ENCODE measurements at regions of chr22 and their contacts with region 1.

Region 1: GRCh38 chr22:41951898-41952474 is at the start of gene SMIM45:
- DNase-seq: no peak
- H3K4me3 ChIP-seq: no peak within 1 kb of the TSS
- H3K27ac ChIP-seq: no peak within 1 kb of the TSS
- H3K4me1 ChIP-seq: peaks cover 4 to 5% (median 5%) of the 10 kb centered on the region in 3 donors
- H3K27me3 ChIP-seq: no peaks in the 10 kb centered on the region
- CTCF ChIP-seq: no peak
- POLR2A ChIP-seq: no peak

Region 2: GRCh38 chr22:41998361-41999275 is 46.6 kb after region 1 on chr22 and contains the start of gene WBP2NL:
- intact Hi-C with region 1: no loop called
- DNase-seq: peak; percentile 47
- H3K4me3 ChIP-seq: peak within 1 kb of the TSS; percentile 38 to 69 (median 52)
- H3K27ac ChIP-seq: peak within 1 kb of the TSS in 3 of 4 donors; percentile 33 to 61 (median 60)
- H3K4me1 ChIP-seq: peaks cover 3 to 18% (median 13%) of the 10 kb centered on the region in 3 donors
- H3K27me3 ChIP-seq: peaks cover 0 to 8% (median 0%) of the 10 kb centered on the region in 4 donors
- CTCF ChIP-seq: peak in 2 of 6 experiments; percentile 4 to 8
- POLR2A ChIP-seq: peak in 3 of 4 donors; percentile 24 to 56 (median 43)
- total RNA-seq, gene WBP2NL: 0.08 to 0.95 TPM in 2 of 4 donors, not detected in the others

Region 3: DNA sequence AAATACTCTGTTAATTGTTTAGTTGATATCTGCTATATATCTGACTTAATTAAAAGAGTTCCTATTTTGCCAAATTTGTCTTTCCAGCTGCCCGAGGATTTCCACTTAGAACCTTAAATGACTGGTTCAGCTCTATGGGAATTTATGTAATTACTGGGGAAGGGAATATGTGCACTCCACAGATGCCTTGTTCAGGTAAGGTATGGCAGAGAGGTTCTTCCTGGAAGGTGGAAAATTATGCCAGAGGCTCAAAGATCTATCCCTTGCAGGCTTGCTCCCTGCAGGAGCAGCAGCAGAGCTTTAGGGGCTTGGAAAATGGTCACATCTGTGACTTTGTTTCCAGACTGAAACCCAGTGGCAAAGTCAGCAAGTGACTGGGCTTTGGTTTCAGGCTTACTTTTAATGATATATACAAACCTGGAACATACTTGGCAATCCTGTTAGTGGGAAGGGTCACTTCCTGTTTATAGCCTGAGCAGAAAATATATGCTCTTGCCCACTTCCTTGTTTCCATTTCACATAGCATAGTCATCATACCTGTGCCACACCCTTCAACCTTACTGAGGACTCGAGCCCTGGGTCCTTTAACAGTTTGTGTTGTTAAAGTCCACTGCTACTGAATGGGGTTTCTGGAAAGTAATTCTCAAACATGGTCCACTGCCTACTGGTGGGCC is 70.3 kb after region 1 on chr22:
- intact Hi-C with region 1: no loop called
- DNase-seq: no peak
- H3K4me3 ChIP-seq: no peak overlapping the region
- H3K27ac ChIP-seq: peak overlapping the region in 3 of 4 donors; percentile 37 to 60 (median 53)
- H3K4me1 ChIP-seq: peaks cover 0 to 5% (median 0%) of the 10 kb centered on the region in 3 donors
- H3K27me3 ChIP-seq: no peaks in the 10 kb centered on the region
- CTCF ChIP-seq: no peak
- POLR2A ChIP-seq: no peak

Region 4: GRCh38 chr22:42459287-42460063 is 507.5 kb after region 1 on chr22:
- intact Hi-C with region 1: loop called (anchors 10 kb)
- DNase-seq: no peak
- H3K4me3 ChIP-seq: no peak overlapping the region
- H3K27ac ChIP-seq: no peak overlapping the region
- H3K4me1 ChIP-seq: no peaks in the 10 kb centered on the region
- H3K27me3 ChIP-seq: peaks cover 0 to 76% (median 0%) of the 10 kb centered on the region in 4 donors
- CTCF ChIP-seq: no peak
- POLR2A ChIP-seq: no peak

Measured in esophagus squamous epithelium (tissue), 5 donors.